Activated naive CD4-positive, alpha-beta T cell treated with anti-CD3 and anti-CD28 coated beads for 36 hours (primary cell): ENCODE measurements at regions of chr10 and their contacts with region 1.

Region 1: DNA sequence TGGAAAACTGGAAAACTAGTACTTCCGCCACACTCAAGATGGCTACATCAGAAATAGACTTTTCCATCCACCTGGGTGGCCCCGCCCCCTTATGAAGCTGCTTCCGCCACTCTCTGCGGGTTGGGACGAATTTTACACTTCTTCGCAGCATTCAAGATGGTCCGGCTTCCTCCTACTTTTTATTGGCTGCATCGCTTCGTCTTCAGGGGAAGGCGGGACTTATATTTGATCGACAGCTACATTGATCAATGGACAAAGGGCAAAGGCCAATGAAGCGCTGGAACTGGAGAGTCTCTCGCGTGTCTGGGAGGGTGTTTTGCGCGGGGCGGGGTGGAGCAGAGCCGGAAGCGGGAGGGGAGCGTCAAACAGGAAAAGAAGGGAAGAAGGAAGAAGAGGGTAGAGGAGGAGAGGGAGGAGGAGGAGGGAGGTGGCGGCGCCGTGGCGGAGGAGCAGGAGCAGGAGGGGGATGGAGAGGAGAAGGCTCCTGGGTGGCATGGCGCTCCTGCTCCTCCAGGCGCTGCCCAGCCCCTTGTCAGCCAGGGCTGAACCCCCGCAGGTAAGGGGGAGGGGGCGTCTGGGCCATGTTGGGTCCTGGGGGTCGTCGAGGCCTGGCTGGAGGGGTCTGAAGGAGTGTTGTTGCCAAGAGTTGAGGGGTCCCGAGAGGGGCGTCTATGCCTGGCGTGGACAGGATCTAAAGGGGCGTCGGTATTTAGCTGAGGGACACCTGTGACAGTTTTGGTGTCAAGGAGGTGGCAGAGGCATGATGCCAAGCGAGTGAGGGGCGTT is at the start of gene WBP1L:
- DNase-seq: peak; percentile 97
- H3K4me3 Mint-ChIP-seq: peak within 1 kb of the TSS; percentile 90
- H3K27ac Mint-ChIP-seq: peak within 1 kb of the TSS; percentile 83
- H3K4me1 Mint-ChIP-seq: peaks cover 43% of the 10 kb centered on the region
- H3K27me3 Mint-ChIP-seq: no peaks in the 10 kb centered on the region
- total RNA-seq, gene WBP1L: 10.5 to 11.8 TPM

Region 2: GRCh38 chr10:102401735-102402511 is 341.9 kb before region 1 on chr10:
- CTCF ChIA-PET with region 1: no interaction called
- intact Hi-C with region 1: no loop called
- DNase-seq: no peak
- H3K4me3 Mint-ChIP-seq: peak overlapping the region; percentile 6
- H3K27ac Mint-ChIP-seq: peak overlapping the region; percentile 53
- H3K4me1 Mint-ChIP-seq: peaks cover 42% of the 10 kb centered on the region
- H3K27me3 Mint-ChIP-seq: no peaks in the 10 kb centered on the region

Region 3: DNA sequence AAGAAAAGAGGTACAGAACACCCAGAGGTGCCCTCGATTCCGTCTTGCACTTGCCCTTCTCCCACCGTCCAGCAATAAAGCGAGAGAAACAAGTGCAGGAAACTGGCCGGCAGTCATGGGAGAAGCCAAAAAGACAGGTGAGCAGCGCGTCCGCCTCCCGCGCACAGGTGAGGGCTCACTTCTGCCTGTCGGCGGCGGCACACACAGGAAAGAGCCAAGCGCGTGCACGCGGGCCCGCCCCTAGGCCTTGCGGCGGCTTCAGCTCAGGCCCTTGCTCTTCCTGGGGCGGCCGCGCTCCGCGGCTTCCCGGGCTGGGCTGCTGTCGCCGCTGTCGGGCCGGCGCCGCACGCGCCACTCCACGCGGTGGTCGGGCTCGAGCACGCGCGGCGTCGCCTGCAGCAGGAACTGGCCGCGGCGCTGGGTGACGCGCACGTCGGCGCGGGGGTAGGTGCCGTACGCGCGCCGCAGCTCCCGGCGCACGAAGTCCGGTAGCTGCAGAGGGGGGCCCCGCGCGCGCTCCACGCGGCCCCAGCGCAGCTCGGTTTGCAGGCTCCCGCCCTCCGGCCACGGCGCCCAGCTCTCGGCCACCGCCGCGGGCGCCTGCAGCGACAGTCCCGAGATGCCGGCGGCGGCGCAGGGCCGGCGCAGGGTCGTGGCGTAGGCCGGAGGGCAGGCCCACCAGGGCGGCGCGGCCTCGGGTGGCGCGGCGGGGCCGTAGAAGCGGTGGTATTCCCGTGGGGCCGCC is 293.4 kb before region 1 on chr10:
- CTCF ChIA-PET with region 1: no interaction called
- intact Hi-C with region 1: loop called (anchors 1 kb)
- DNase-seq: peak; percentile 82
- H3K4me3 Mint-ChIP-seq: peak overlapping the region; percentile 96
- H3K27ac Mint-ChIP-seq: peak overlapping the region; percentile 96
- H3K4me1 Mint-ChIP-seq: peaks cover 27% of the 10 kb centered on the region
- H3K27me3 Mint-ChIP-seq: no peaks in the 10 kb centered on the region

Region 4: DNA sequence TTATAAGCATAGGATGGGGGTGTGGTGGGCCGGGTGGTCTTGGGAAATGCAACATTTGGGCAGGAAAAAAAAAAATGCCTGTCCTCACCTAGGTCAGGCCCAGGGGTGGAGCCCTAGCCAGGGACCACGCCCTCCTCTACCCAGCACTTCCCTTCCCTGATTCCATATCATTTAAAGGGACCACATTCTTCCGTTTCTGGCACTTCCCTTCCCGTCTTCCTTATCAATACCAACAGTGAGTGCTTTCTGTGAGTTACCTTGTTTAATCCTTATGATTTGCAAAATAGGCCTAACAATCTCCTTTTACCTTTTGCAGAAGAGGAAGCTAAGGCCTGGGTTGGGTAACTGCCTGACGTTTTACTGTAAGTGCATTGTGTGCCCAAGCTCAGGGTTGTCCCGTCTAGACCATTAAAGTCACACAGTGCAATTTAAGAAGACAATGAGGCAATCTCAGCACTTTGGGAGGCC is 275.8 kb before region 1 on chr10:
- CTCF ChIA-PET with region 1: no interaction called
- intact Hi-C with region 1: no loop called
- DNase-seq: no peak
- H3K4me3 Mint-ChIP-seq: no peak overlapping the region
- H3K27ac Mint-ChIP-seq: no peak overlapping the region
- H3K4me1 Mint-ChIP-seq: peaks cover 12% of the 10 kb centered on the region
- H3K27me3 Mint-ChIP-seq: no peaks in the 10 kb centered on the region

Region 5: GRCh38 chr10:102635377-102635776 is 108.4 kb before region 1 on chr10:
- CTCF ChIA-PET with region 1: no interaction called
- intact Hi-C with region 1: no loop called
- DNase-seq: peak; percentile 36
- H3K4me3 Mint-ChIP-seq: no peak overlapping the region
- H3K27ac Mint-ChIP-seq: peak overlapping the region; percentile 55
- H3K4me1 Mint-ChIP-seq: peaks cover 41% of the 10 kb centered on the region
- H3K27me3 Mint-ChIP-seq: no peaks in the 10 kb centered on the region

Region 6: DNA sequence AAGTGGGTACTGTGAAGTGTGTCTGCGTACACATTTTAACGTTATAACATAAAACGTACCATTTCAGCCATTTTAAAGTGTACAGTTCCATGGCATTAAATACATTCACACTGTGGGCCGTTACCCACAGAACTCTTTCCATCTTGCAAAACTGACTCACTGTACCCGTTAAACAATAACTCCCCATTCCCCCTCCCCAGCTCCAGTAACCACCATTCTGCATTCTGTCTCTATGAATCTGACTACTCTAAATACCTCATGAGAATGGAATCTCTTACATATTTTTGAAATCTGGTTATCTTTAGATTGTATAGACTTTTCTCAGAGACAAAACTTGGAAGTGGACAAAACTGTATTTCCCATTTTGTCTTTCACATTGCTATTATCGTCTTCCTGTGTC is 38.9 kb before region 1 on chr10:
- CTCF ChIA-PET with region 1: no interaction called
- intact Hi-C with region 1: no loop called
- DNase-seq: no peak
- H3K4me3 Mint-ChIP-seq: no peak overlapping the region
- H3K27ac Mint-ChIP-seq: no peak overlapping the region
- H3K4me1 Mint-ChIP-seq: peaks cover 2% of the 10 kb centered on the region
- H3K27me3 Mint-ChIP-seq: no peaks in the 10 kb centered on the region

Region 7: DNA sequence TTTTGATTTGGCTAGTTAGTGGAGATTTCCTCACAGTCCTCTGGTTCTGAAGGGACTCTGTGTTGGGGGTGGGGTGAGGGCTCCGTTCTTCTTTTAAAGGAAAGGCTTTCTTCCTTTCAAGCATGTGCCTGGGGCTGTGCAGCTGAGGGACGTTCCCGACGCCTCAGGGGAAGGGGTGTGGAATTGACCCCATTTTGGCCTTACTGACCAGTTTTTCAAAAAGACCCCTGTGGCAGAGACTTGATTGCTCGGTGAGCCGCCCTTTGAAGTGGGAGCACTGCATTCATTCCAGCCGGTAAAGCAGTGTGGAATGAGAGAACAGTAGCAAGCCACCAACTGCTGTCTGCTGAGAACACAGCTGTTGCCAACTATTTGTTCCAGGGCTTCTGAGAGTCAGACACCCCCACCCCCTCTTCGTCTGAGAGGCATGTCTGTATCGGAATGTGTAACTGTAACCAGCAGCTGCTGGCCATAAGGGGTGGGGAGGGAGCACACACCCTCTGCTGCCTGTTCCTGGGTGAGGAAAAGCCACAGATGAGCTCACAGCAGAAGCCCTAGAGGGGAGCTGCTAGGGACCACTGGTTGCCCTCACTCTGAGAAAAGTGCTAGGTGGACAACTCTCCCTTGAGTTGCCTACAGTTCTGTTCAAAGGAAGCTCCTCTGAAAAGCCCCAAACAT is 33.1 kb after region 1 on chr10:
- CTCF ChIA-PET with region 1: no interaction called
- intact Hi-C with region 1: loop called (anchors 1 kb)
- DNase-seq: peak; percentile 64
- H3K4me3 Mint-ChIP-seq: no peak overlapping the region
- H3K27ac Mint-ChIP-seq: no peak overlapping the region
- H3K4me1 Mint-ChIP-seq: peaks cover 77% of the 10 kb centered on the region
- H3K27me3 Mint-ChIP-seq: no peaks in the 10 kb centered on the region

Region 8: GRCh38 chr10:102802920-102803534 is 59.2 kb after region 1 on chr10:
- CTCF ChIA-PET with region 1: no interaction called
- intact Hi-C with region 1: loop called (anchors 1 kb)
- DNase-seq: peak; percentile 66
- H3K4me3 Mint-ChIP-seq: no peak overlapping the region
- H3K27ac Mint-ChIP-seq: peak overlapping the region; percentile 93
- H3K4me1 Mint-ChIP-seq: peaks cover 35% of the 10 kb centered on the region
- H3K27me3 Mint-ChIP-seq: no peaks in the 10 kb centered on the region

Region 9: DNA sequence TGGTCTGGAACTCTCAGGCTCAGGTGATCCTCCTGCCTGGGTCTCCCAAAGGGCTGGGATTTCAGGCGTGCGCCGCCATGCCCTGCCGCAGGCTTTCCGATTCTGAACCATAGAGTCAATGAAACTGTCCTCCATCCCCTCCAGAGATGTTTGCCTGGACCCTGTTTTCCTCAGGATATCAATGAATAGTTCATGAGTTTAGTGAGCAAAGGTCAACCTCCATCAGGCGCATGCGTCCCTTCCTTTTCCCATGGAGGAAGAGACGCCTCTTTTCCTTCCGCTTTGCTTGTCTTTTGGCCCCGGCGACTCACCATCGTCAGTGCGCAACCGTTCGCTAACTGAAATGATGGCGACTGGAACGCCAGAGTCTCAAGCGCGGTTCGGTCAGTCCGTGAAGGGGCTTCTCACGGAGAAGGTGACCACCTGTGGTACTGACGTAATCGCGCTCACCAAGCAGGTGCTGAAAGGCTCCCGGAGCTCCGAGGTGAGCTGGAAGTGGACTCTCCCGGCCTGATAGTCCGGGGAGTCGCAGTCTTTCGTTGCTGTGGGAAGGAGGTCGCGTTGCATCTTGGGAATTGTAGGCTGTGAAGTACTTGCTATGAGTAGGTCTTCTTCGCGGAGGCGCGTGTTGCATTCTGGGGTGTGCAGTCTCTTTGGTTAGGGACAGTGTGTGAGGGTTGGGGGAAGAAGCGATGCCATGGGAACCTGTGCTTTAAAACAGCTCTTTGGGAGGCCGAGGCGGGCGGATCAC is 110.3 kb after region 1 on chr10 and contains the start of gene BORCS7:
- CTCF ChIA-PET with region 1: no interaction called
- intact Hi-C with region 1: loop called (anchors 1 kb)
- DNase-seq: peak; percentile 95
- H3K4me3 Mint-ChIP-seq: peak within 1 kb of the TSS; percentile 95
- H3K27ac Mint-ChIP-seq: peak within 1 kb of the TSS; percentile 97
- H3K4me1 Mint-ChIP-seq: peaks cover 17% of the 10 kb centered on the region
- H3K27me3 Mint-ChIP-seq: no peaks in the 10 kb centered on the region
- total RNA-seq, gene BORCS7: 5.6 to 5.8 TPM